ENCODE measurements at regions of chr1 and their contacts with region 1.

Region 1: GRCh38 chr1:167440345-167440744 is 78.0 kb downstream of the CD247 start:
- DNase-seq: no peak
- ATAC-seq: no peak

Region 2: DNA sequence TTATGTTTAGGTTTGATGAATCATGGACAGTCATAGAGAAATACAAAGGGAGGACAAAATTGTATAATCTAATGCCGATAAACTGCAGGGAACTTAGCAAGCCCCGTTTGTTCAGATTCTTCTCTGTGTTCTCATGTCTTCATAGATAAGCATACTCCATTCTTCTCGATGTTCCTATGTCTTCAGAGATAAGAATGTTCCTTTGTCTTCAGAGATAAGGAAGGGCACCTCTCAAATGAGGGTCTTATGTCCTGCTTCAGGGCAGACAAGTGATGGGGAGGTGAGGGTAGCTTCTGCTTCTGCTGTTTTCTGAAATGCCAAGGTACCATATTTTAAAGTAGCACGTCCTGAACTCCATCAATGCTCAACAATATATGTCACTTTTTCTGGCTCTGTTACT is 544.6 kb before region 1 on chr1:
- intact Hi-C with region 1: no loop called
- DNase-seq: no peak
- ATAC-seq: no peak

Region 3: DNA sequence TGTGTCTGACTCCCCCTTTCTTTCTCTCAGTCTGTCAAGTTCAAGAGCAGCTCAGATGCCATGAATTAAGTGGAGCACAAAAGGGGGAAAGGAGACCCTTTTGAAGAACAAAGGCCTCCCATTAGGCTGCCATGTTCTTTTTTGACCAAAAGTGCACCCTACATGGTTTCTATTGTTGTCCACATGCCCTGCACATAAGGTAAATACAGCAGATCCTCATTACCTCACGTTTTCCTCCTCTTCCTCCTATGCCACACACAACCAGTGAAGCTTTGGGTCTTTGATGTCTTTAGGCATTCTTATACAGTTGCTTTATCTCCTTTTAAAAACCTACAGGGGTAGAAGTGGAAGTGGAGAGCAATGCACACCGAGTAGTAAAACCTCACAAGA is 172.0 kb before region 1 on chr1:
- intact Hi-C with region 1: loop called (anchors 2 kb)
- DNase-seq: no peak
- ATAC-seq: no peak

Region 4: DNA sequence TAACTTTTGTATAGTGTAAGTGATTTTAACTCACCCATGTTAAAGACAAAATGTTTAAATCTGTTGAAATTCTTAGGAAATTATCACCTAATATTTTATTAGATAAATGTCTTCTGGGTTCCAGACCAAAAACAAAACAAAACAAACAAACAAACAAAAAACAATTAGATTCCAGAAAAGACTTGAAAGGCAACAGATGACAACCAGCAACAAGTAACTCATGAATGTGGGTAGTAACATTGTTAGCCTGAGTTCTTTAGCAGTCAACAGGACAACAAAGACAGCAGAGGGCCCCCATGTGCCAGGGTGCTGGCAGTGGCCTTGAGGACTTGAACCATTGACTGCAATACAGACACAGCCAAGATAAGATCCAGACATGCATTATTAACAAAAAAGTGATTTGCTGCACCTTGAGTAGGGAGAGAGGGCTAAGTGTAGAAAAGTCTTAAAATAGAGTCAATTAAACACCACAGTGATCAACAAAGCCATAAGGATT is 80.4 kb after region 1 on chr1:
- intact Hi-C with region 1: no loop called
- DNase-seq: no peak
- ATAC-seq: no peak